Prostate gland (tissue), 2 donors: ENCODE measurements at regions of chr14 and their contacts with region 1.

Region 1: GRCh38 chr14:102362545-102363181 is at the starts of genes CINP and TECPR2:
- DNase-seq: peak; percentile 98
- H3K4me3 ChIP-seq: peak within 1 kb of the TSS; percentile 93 to 99
- H3K27ac ChIP-seq: peak within 1 kb of the TSS; percentile 88 to 89
- H3K4me1 ChIP-seq: no peaks in the 10 kb centered on the region
- H3K27me3 ChIP-seq: no peaks in the 10 kb centered on the region
- CTCF ChIP-seq: no peak
- POLR2A ChIP-seq: peak; percentile 58
- total RNA-seq, gene CINP: 36.2 to 40.8 TPM
- total RNA-seq, gene TECPR2: 12.9 to 45.0 TPM

Region 2: GRCh38 chr14:102408724-102409123 is 46.1 kb after region 1 on chr14:
- intact Hi-C with region 1: loop called (anchors 5 kb)
- DNase-seq: no peak
- H3K4me3 ChIP-seq: no peak overlapping the region
- H3K27ac ChIP-seq: peak overlapping the region in 1 of 2 donors; percentile 27
- H3K4me1 ChIP-seq: no peaks in the 10 kb centered on the region
- H3K27me3 ChIP-seq: no peaks in the 10 kb centered on the region
- CTCF ChIP-seq: no peak
- POLR2A ChIP-seq: no peak

Region 3: DNA sequence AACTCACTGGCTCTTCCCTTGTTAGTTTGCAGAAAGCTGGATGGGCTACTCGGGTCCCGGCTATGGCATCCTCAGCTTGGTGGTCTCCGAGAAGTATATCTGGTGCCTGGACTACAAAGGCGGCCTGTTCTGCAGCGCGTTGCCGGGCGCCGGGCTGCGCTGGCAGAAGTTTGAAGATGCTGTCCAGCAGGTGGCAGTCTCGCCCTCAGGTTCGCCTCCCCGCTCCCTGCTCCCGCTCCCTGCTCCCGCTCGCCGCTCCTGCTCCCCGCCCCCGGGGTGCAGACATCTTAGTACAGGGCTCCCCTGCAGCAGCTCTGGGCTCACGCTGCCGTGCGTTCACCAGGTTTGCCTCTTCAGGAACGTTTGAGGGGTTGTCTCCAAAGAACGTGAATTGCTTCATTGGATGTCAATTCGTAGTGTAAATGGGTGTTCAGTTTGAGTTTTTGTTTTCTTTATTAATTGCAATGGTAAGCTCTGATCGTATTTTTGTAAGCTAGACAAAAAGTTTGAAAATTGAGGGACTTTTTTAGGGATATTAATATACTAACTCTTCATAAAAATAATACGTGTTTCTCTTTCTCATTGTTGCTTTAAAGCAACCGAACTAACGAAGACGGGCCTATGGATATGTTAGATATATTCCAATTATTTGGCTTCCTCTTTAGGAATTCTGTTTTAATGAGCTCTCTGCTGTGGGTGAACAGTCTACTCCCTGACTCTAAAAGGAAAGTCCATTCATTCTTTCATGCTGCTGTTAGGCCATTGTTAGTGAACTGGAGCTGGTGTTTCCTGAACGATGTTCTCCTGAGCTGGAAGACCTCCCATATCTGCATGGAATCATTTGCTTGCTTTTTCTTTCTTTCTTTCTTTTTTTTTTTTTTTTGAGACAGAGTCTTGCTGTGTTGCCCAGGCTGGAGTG is 75.6 kb after region 1 on chr14:
- intact Hi-C with region 1: loop called (anchors 10 kb)
- DNase-seq: peak; percentile 85
- H3K4me3 ChIP-seq: peak overlapping the region; percentile 11 to 17
- H3K27ac ChIP-seq: no peak overlapping the region
- H3K4me1 ChIP-seq: no peaks in the 10 kb centered on the region
- H3K27me3 ChIP-seq: no peaks in the 10 kb centered on the region
- CTCF ChIP-seq: peak; percentile 31 to 92 (median 80)
- POLR2A ChIP-seq: no peak

Region 4: DNA sequence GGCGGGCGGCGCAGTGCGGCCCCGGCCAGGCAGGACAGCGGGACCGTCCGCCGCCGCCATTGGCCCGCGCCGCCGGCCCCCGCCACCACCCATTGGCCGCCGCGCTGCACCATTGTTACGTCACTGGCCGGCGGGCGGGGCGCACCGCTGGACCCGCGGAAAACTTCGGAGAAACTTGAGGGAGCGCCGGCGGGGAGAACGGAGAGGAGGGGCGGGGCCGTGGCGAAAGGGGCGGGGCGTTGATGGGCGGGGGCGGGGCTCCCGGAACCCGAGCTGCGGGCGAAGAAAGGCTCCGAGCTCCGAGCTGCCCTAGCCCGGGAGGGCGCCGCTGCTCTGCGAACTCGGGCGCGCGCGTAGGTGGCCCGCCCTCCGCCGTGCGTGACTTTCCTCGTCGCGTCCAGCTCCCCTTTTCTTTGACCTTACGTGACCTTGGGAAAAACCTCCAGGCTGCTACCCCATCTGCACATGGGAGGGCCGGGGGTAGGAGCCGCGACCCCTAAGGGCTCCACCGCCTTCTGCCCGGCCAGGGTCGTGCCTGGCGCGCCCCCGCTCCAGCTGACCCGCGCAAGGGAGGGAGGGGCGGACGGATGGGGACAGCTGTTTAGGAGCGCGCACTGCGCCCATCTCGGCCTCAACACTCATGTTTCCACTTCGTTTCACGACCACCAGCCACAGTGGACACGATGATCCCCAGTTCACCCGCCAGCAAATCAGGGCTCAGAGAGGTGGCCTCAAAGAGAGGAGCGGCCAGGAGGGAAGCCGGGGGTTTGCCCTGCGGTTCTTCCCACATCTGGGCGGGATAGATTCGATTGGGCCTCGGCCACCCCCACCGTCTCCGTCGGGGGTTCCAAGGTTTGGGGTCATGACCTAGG is 147.3 kb after region 1 on chr14 and contains the start of gene ANKRD9:
- intact Hi-C with region 1: loop called (anchors 5 kb)
- DNase-seq: peak; percentile 96
- H3K4me3 ChIP-seq: peak within 1 kb of the TSS; percentile 60 to 66
- H3K27ac ChIP-seq: peak within 1 kb of the TSS; percentile 88 to 95
- H3K4me1 ChIP-seq: peaks cover 3% of the 10 kb centered on the region
- H3K27me3 ChIP-seq: no peaks in the 10 kb centered on the region
- CTCF ChIP-seq: no peak
- POLR2A ChIP-seq: peak; percentile 81
- total RNA-seq, gene ANKRD9: 81.1 to 81.5 TPM